Activated T-helper 1 cell treated with anti-CD3 and anti-CD28 coated beads, Interleukin-12 subunit alpha, Interleukin-12 subunit beta, Interleukin-2, Interleukin-4 antibody, amounts not matched to agents 30 ng/mL and 10 ng/mL and 1 ng/mL, durations not matched to agents 14 hours and 24 hours and 36 hours (primary cell): ENCODE measurements at regions of chr1 and their contacts with region 1.

Region 1: DNA sequence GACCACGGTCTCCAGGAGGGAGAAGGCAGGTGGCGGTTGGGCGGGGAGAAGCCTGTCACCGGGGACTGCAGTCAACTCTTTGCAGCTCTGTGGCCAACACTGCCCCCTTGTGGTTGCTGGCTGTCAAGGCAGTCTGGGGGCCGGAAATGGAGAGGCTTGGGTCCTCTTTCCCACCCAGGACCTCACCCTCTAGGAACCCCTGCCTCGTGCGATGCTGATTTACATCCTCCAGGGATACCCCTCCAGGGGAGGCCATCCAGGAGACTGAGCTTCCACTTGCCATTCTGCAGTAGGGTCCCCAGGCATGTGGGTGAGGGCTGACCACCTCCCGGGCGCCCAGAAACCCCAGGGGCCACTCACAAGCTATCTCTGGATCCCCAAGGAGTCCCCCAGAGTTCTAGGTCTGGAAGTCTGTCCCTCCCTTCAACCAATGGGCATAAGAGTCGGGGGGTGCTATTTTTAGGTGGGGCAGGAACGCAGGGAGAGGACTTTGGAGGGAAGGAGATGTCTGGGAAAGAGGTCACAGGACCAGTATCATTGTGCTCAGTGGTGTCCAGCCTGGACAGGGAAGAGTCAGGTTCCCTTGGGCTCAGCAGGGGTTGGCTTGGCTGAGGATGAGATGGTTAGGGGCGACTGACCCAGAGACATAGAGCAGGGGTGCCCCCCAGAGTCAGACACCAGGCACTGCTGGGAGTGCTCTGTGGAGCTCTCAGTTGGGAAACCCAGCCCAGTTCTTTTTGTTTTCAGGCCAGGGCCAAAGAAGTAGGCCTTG is 7.1 kb upstream of the GPR61 start:
- DNase-seq: peak; percentile 85
- H3K4me3 Mint-ChIP-seq: peak overlapping the region; percentile 53
- H3K27ac Mint-ChIP-seq: peak overlapping the region; percentile 86
- H3K4me1 Mint-ChIP-seq: peaks cover 24% of the 10 kb centered on the region
- H3K27me3 Mint-ChIP-seq: no peaks in the 10 kb centered on the region

Region 2: DNA sequence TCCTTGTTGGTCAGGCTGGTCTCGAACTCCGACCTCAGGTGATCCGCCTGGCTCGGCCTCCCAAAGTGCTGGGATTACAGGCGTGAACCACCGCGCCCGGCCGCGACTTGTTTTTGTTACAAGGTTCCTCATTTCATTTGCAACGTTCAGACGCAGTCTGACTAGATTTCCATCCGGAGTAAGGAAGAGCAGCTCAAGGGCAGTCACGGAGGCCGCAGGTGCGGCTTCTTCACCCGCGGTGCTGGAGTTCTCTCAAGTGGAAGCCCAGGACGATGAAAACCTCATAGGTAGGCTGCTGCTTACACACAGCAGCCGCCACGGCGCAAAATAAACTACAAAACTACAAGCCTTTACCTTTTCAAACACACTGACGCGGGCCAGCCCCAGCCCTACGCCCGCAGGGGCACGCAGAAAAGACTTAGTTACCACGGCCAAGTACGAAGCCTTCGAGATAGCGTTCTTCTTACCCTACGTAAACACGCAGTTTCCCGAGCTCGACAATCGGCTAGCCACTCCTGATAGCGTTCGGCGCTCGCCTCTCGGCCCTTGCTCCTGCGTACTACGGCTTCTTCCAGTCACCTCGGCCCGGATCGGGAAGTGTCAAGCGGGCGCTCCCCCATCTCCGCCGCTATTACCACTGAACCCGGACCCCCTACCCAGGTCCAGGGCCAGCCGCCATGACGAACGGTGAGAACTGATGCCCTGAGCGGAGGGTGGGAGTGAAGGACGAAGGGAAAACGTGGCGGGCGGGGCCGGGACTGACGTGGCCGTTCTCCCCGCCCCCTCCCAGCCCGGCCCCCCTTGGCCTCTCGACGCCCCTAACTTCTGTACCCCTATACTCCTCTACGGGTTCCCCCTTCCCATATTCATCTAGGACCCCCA is 442.1 kb before region 1 on chr1 and contains the start of gene TMEM167B:
- intact Hi-C with region 1: loop called (anchors 5 kb)
- DNase-seq: peak; percentile 84
- H3K4me3 Mint-ChIP-seq: peak within 1 kb of the TSS; percentile 92
- H3K27ac Mint-ChIP-seq: peak within 1 kb of the TSS; percentile 93
- H3K4me1 Mint-ChIP-seq: peaks cover 21% of the 10 kb centered on the region
- H3K27me3 Mint-ChIP-seq: peaks cover 2% of the 10 kb centered on the region
- total RNA-seq, gene TMEM167B: 26.2 and 27.6 TPM in 2 replicates

Region 3: DNA sequence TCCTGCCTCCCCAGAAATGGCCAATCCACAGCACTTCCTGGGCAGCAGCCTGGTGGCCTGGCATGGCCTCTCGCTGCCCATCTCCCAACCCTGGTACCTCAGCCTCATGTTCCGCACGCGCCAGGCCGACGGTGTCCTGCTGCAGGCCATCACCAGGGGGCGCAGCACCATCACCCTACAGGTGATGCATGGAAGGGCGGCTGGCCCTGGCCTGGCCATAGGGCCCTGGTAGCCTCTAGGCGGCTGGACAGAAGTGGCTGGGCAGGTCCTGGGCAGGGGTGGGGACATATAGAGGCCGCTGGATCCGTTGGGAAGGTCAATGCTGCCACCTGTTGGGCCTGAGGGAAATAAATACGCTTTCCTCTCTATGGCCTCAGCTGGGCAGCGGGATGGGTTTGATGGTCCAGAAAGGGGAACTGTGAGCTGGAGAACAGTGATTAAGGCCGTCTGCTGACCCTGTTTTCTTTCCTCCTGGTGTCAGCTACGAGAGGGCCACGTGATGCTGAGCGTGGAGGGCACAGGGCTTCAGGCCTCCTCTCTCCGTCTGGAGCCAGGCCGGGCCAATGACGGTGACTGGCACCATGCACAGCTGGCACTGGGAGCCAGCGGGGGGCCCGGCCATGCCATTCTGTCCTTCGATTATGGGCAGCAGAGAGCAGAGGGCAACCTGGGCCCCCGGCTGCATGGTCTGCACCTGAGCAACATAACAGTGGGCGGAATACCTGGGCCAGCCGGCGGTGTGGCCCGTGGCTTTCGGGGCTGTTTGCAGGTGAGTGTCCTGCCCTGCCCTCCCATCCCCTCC is 268.8 kb before region 1 on chr1:
- intact Hi-C with region 1: loop called (anchors 1 kb)
- DNase-seq: peak; percentile 71
- H3K4me3 Mint-ChIP-seq: no peak overlapping the region
- H3K27ac Mint-ChIP-seq: peak overlapping the region; percentile 49
- H3K4me1 Mint-ChIP-seq: no peaks in the 10 kb centered on the region
- H3K27me3 Mint-ChIP-seq: no peaks in the 10 kb centered on the region

Region 4: GRCh38 chr1:109397538-109398342 is 134.8 kb before region 1 on chr1 and contains the start of gene SORT1:
- intact Hi-C with region 1: loop called (anchors 1 kb)
- DNase-seq: peak; percentile 45
- H3K4me3 Mint-ChIP-seq: peak within 1 kb of the TSS; percentile 86
- H3K27ac Mint-ChIP-seq: peak within 1 kb of the TSS; percentile 38
- H3K4me1 Mint-ChIP-seq: peaks cover 25% of the 10 kb centered on the region
- H3K27me3 Mint-ChIP-seq: peaks cover 42% of the 10 kb centered on the region
- total RNA-seq, gene SORT1: 1.4 and 1.5 TPM in 2 replicates

Region 5: GRCh38 chr1:109499661-109500536 is 32.7 kb before region 1 on chr1:
- intact Hi-C with region 1: loop called (anchors 1 kb)
- DNase-seq: peak; percentile 32
- H3K4me3 Mint-ChIP-seq: no peak overlapping the region
- H3K27ac Mint-ChIP-seq: no peak overlapping the region
- H3K4me1 Mint-ChIP-seq: peaks cover 75% of the 10 kb centered on the region
- H3K27me3 Mint-ChIP-seq: no peaks in the 10 kb centered on the region